Psoas muscle (tissue), 8 donors: ENCODE measurements at regions of chr15 and their contacts with region 1.

Region 1: GRCh38 chr15:71124937-71125790 is 9.9 kb downstream of the THSD4 start:
- DNase-seq: no peak
- ATAC-seq: no peak
- H3K4me3 ChIP-seq: no peak overlapping the region
- H3K27ac ChIP-seq: peak overlapping the region; percentile 25
- H3K4me1 ChIP-seq: peaks cover 26% of the 10 kb centered on the region
- H3K27me3 ChIP-seq: no peaks in the 10 kb centered on the region
- CTCF ChIP-seq: no peak

Region 2: DNA sequence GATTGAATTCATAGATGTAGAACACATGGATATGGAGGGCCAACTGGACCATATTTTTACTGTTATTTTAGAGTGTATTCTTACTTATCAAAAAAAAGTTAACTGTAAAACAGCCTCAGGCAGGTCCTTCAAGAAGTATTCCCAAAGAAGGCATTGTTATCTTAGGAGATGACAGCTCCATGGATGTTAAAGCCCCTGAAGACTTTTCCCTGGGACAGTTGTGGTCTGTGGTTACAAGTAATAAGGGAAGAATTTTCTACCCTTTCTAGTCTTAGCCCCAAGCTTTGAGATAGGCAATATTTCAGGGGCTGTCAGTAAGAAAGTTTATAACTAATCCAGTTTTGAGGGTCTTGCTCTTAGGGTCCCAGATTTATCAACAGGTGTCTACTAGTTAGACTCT is 170.0 kb before region 1 on chr15:
- intact Hi-C with region 1: no loop called
- DNase-seq: no peak
- ATAC-seq: no peak
- H3K4me3 ChIP-seq: no peak overlapping the region
- H3K27ac ChIP-seq: no peak overlapping the region
- H3K4me1 ChIP-seq: no peaks in the 10 kb centered on the region
- H3K27me3 ChIP-seq: no peaks in the 10 kb centered on the region
- CTCF ChIP-seq: no peak

Region 3: DNA sequence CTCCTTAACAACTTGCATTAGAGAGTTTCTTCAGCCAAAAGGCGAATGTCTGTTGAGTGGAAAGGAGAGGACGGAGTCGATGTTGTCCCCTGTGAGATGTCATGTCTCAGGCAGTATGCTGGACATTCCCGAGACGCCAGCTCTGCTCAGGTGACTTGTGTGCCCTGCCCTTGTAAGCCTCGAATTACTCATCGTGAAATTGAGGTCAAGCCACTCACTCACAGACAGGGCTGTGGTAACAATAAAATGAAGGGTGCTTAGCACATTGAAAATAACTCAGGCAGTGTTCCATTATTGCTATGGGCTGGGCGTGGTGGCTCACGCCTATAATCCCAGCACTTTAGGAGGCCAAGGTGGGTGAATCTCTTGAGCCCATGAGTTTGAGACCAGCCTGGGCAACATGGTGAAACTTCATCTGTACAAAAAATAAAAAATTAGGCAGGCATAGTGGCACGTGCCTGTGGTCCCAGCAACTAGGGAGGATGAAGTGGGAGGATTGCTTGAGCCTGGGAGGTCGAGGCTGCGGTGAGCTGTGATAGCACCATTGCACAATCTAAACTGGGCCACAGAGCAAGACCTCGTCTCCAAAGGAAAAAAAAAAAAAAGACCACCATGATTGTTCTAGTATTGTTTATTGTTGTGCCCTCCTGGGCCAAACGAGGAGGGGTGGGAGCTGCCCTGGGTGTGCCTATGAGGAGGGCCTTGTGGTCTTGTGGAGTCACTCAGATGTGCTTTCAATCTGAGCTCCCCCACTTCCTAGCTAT is 204.5 kb after region 1 on chr15:
- intact Hi-C with region 1: loop called in 1 of 2 experiments (anchors 5 kb)
- DNase-seq: peak; percentile 31 to 76
- ATAC-seq: peak; percentile 95 to 98 (median 96)
- H3K4me3 ChIP-seq: no peak overlapping the region
- H3K27ac ChIP-seq: peak overlapping the region; percentile 68
- H3K4me1 ChIP-seq: peaks cover 36% of the 10 kb centered on the region
- H3K27me3 ChIP-seq: no peaks in the 10 kb centered on the region
- CTCF ChIP-seq: no peak